Activated CD8-positive, alpha-beta memory T cell treated with anti-CD3 and anti-CD28 coated beads, Interleukin-2, amount 10 ng/mL, durations not matched to agents 7 days and 5 days (primary cell): ENCODE measurements at regions of chr20 and their contacts with region 1.

Region 1: GRCh38 chr20:45436732-45437391 is 20.9 kb downstream of the PIGT start:
- DNase-seq: peak; percentile 91
- ATAC-seq: peak; percentile 100
- H3K4me3 Mint-ChIP-seq: peak overlapping the region; percentile 81
- H3K27ac Mint-ChIP-seq: peak overlapping the region; percentile 58
- H3K4me1 Mint-ChIP-seq: peaks cover 25% of the 10 kb centered on the region
- H3K27me3 Mint-ChIP-seq: no peaks in the 10 kb centered on the region

Region 2: DNA sequence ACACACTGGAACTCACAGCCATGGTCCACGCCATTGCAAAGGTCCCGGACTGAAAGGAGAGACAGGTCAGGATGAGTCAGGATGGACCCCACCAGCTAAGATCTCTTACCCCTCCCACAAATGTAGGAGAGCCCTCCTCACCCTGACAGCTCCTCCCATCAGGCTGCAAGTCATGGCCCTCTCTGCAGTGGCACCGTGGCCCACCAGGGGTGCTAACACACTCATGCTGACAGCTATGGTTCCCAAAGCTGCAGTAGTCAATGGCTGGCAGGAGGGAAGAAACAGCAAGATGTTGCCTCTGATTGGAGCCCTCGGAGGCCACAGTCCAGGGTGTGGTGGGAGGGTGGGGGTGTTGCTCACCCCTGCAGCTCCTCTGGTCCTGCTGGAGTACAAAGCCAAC is 135.9 kb before region 1 on chr20:
- CTCF ChIA-PET with region 1: interaction called, 10 read pairs
- DNase-seq: peak; percentile 75
- ATAC-seq: peak; percentile 69
- H3K4me3 Mint-ChIP-seq: no peak overlapping the region
- H3K27ac Mint-ChIP-seq: no peak overlapping the region
- H3K4me1 Mint-ChIP-seq: peaks cover 42% of the 10 kb centered on the region
- H3K27me3 Mint-ChIP-seq: peaks cover 29% of the 10 kb centered on the region

Region 3: DNA sequence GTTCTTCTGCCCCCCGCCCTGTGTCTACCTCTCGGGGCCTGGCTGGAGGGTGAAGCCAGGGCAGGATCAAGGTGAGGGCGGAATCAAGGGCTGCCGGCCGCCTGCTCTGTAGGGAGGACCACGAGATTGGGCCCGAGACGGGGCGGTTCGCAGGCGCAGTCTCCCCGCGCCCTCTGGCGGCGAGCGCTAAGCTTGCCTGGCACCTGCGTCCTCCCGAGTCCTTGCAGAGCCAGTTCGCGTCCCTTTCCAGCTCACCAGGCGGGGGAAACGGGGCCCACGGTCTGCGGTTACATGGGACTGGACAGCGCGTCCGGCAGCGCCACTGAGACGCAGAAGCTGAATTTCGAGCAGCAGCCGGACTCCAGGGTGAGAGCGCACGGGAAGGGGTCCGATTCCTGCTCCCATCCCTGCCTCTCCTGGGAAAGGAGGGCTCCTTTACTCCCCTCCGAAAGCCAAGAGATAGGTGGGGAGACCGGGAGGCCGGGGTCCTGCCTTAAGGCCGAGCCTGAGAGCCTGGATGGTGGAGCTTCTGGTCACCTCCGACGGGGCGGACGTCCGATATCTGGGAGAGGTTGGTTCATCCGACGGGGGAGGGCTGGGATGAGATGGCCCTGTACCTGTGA is 125.2 kb before region 1 on chr20:
- CTCF ChIA-PET with region 1: interaction called, 26 read pairs
- DNase-seq: peak; percentile 77
- ATAC-seq: peak; percentile 79
- H3K4me3 Mint-ChIP-seq: no peak overlapping the region
- H3K27ac Mint-ChIP-seq: no peak overlapping the region
- H3K4me1 Mint-ChIP-seq: peaks cover 17% of the 10 kb centered on the region
- H3K27me3 Mint-ChIP-seq: peaks cover 43% of the 10 kb centered on the region

Region 4: DNA sequence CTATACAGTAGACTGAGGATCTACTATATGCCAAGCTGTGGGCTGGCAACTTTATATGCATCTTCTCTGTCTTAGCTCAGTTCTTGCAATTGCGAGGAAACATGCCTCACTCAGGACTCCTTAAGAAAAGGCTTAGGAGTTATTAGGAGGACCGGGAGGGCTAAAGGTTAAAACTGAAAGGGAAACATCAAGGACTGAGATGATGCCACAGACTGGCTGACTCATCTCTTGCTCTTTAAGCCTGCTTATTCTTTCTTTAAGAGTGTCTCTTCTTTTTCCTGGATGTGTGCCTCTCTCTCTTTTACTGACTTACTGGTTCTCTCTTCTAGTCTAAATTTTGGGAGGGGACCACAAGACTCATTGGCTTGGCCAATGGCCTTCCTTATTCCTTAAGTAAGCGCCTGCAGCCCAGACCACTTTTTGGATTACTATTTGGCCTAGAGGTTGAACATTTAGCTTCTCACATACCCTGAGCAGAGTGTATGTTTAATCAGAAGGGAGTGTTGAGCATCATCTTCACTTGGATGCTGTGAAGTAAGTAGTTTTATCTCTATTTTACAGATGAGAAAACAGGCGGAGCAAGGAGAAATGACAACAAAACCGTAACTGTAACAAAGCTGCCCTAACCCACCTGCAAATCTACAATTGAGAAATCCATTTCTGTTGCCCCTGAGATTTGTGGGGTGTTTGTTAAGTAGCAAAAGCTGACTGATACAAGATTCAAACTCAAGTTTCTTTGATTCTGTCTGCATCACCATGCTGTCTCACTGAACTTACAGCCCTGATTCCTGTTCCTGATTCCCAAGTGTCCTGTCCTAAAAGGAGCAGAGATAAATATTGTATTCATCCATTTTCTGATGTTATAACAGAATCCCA is 81.4 kb before region 1 on chr20:
- CTCF ChIA-PET with region 1: interaction called, 478 read pairs
- DNase-seq: no peak
- ATAC-seq: peak; percentile 89
- H3K4me3 Mint-ChIP-seq: peak overlapping the region; percentile 59
- H3K27ac Mint-ChIP-seq: peak overlapping the region; percentile 91
- H3K4me1 Mint-ChIP-seq: peaks cover 52% of the 10 kb centered on the region
- H3K27me3 Mint-ChIP-seq: no peaks in the 10 kb centered on the region

Region 5: GRCh38 chr20:45362804-45363610 is 73.9 kb before region 1 on chr20 and contains the start of gene SYS1:
- CTCF ChIA-PET with region 1: interaction called, 478 read pairs
- DNase-seq: peak; percentile 99
- ATAC-seq: peak; percentile 92
- H3K4me3 Mint-ChIP-seq: peak within 1 kb of the TSS; percentile 100
- H3K27ac Mint-ChIP-seq: peak within 1 kb of the TSS; percentile 97
- H3K4me1 Mint-ChIP-seq: peaks cover 52% of the 10 kb centered on the region
- H3K27me3 Mint-ChIP-seq: peaks cover 3% of the 10 kb centered on the region
- total RNA-seq, gene SYS1: 19.6 to 24.9 TPM

Region 6: DNA sequence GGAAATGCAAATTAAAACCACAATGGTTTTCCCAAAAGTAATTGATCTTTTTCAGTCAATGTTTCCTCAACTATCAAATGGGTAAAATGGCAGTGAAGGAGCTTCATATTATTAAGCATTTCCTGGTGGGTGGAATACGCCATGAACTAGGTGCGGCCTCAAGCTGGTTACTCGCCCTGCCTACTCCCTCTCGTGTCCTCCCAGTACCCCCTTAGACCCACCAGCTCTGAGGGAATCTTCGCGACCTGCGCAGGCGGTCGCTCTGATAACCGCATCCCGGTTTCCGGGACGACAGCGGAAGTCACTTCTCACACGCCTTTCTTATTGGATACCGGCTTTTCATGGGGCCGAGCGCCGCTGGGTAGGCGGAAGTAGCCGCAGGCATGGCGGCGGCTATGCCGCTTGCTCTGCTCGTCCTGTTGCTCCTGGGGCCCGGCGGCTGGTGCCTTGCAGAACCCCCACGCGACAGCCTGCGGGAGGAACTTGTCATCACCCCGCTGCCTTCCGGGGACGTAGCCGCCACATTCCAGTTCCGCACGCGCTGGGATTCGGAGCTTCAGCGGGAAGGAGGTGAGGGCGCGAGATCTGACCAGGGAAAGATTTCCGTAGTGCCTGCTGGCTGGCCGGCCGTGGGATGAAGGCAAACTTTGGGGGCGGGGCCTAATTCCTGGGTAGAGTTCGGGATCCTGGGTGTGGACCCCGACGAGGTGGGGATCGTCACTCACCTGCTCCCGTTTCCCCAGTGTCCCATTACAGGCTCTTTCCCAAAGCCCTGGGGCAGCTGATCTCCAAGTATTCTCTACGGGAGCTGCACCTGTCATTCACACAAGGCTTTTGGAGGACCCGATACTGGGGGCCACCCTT is 20.9 kb before region 1 on chr20 and contains the start of gene PIGT:
- CTCF ChIA-PET with region 1: interaction called, 26 read pairs
- DNase-seq: peak; percentile 93
- ATAC-seq: peak; percentile 94
- H3K4me3 Mint-ChIP-seq: peak within 1 kb of the TSS; percentile 91
- H3K27ac Mint-ChIP-seq: peak within 1 kb of the TSS; percentile 92
- H3K4me1 Mint-ChIP-seq: peaks cover 49% of the 10 kb centered on the region
- H3K27me3 Mint-ChIP-seq: no peaks in the 10 kb centered on the region
- total RNA-seq, gene PIGT: 68.0 to 79.2 TPM

Region 7: DNA sequence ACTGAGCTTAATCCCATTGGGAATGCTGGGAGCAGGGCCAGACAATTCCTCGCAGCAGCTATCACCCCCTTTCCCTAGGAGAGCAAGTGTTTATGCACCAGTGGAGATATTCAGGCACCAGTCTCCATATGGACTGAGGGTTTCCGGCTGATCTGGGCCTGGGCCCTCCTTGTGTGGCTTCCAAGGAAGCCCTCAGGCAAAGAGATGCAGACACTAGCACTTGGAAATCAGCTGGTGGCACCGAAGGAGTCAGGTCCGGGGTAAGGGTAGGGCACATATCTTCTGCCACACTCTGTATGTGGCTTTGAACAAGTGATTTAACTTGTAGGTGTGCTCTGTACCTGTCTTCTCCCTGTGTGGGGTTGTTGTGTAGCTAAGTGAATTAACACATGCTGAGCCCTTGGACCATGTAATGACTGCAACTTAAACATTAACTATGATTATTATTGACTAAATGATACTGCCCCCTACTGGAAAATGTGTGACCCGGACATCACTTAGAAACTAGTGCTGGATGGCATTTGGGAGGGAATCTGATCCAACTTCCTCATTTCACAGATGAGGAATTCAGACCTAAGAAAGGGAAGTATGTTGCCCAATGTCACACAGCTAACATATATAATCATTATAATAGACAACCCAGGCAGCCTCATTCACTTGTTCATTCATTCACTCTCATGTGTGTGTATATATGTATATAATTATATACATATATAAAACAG is 13.4 kb after region 1 on chr20:
- CTCF ChIA-PET with region 1: interaction called, 27 read pairs
- DNase-seq: no peak
- ATAC-seq: peak; percentile 34
- H3K4me3 Mint-ChIP-seq: no peak overlapping the region
- H3K27ac Mint-ChIP-seq: no peak overlapping the region
- H3K4me1 Mint-ChIP-seq: peaks cover 15% of the 10 kb centered on the region
- H3K27me3 Mint-ChIP-seq: peaks cover 8% of the 10 kb centered on the region